Right cardiac atrium (tissue), 5 donors: ENCODE measurements at regions of chr7 and their contacts with region 1.

Region 1: DNA sequence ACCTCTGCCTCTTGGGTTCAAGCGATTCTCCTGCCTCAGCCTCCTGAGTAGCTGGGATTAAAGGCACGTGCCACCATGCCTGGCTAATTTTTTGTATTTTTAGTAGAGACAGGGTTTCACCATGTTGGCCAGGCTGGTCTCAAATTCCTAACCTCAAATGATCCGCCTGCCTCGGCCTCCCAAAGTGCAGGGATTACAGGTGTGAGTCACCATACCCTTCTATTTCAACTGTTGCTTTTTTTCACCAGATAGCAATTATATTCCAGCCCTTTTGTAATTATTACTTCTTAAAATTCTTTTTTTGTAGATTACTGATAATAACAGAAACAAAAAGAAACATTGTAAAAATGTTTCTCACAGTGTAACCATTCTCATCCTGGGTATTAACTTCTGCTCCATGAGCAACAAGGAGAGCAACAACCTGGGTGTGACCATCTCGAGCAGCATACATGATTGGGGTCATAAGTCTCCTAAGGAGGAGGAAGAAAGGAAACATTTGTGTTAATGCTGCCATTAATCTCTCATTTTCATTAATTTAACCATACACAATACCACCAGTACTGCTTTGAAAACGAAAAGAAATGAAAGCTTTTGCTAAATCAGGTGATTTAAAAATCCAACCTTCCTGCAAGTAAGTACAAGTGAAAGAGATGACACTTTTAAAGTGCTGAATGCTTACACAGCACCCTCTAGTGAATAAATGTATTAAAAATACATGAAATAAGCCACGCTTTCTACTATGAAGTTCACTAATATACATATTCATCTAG is 41.8 kb downstream of the ASZ1 start:
- DNase-seq: no peak
- ATAC-seq: peak; percentile 40 to 67
- H3K4me3 ChIP-seq: no peak overlapping the region
- H3K27ac ChIP-seq: no peak overlapping the region
- H3K4me1 ChIP-seq: no peaks in the 10 kb centered on the region
- H3K27me3 ChIP-seq: no peaks in the 10 kb centered on the region

Region 2: DNA sequence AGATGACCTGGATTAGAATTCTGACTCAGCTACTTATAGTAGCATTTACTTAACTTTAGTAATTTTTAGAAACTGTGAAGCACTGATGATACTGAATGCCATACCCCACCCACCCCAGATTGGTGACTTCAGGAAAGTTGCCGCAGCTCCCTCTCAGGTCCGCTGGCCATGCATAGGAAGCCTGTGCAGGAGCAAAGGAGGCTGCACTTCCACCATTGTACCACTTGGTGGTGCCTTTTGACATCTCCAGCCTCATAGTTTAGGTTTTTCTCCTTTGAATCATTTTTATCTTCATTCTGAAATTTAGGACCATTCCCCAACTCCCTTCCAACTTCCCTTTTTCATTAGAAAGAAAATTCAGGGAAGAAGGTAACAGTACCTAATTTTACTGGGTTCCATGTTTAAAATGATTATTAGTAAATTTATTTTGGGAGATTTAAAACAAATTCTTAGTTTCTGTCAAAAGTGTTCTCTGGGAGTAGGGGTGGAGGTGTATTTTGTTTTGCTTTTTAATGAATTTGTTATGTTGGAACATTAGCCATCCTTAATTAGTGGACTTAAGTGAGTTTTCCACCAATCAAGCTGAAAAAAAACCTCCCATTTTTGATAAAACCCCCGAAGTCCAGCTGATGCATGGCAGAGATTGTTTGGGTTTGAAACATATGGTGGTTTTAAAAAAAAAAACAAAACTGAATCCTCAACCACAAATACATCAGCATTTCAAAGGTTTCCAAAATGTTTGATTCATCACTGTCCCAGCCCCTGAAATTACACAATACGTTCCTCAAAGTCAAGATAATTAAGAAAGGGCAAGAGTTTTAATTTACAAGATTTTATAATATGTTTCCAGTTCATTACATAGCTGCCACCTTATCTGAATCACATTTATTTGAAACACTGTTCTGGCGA is 172.3 kb before region 1 on chr7:
- intact Hi-C with region 1: loop called in 2 of 4 experiments (anchors 10 kb)
- DNase-seq: peak; percentile 49 to 79 (median 58)
- ATAC-seq: peak; percentile 50 to 61
- H3K4me3 ChIP-seq: no peak overlapping the region
- H3K27ac ChIP-seq: no peak overlapping the region
- H3K4me1 ChIP-seq: no peaks in the 10 kb centered on the region
- H3K27me3 ChIP-seq: no peaks in the 10 kb centered on the region

Region 3: GRCh38 chr7:117229350-117229749 is 156.2 kb before region 1 on chr7:
- intact Hi-C with region 1: loop called in 1 of 4 experiments (anchors 10 kb)
- DNase-seq: no peak
- ATAC-seq: no peak
- H3K4me3 ChIP-seq: no peak overlapping the region
- H3K27ac ChIP-seq: no peak overlapping the region
- H3K4me1 ChIP-seq: no peaks in the 10 kb centered on the region
- H3K27me3 ChIP-seq: no peaks in the 10 kb centered on the region

Region 4: GRCh38 chr7:117435475-117436043 is 50.0 kb after region 1 on chr7:
- intact Hi-C with region 1: no loop called
- DNase-seq: no peak
- ATAC-seq: no peak
- H3K4me3 ChIP-seq: no peak overlapping the region
- H3K27ac ChIP-seq: no peak overlapping the region
- H3K4me1 ChIP-seq: no peaks in the 10 kb centered on the region
- H3K27me3 ChIP-seq: no peaks in the 10 kb centered on the region